ENCODE measurements at regions of chr12 and their contacts with region 1.

Region 1: DNA sequence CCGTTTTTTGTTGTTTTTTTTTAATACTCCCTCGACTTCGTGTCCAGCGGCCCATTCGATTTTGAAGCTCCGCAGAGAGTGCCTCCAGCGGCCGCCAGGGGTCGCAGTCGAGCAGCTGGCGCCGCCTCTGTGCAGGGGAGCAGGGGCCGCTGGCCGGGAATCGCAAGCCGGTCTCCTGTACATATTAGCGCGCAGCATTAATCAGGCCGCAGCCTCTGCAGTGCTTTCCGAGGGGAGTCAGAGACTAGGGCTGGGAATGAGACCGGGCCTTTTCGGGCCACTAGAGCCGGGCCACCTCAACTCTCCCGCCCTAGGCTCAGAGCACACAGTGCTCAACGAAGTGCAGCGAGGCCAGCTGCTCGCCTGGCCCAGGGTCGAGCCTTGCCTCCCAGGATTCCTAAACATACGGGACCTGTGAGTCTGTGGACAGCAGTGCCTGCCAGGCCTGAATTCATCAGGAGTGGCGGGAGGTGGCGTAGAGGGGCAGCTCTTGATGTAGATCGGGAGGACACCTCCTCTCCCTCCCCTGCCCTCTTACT is 81.8 kb downstream of the EMP1 start:
- DNase-seq: peak; percentile 44 to 91 (median 77)
- ATAC-seq: peak; percentile 94 to 99 (median 98)
- H3K4me3 ChIP-seq: no peak overlapping the region
- H3K27ac ChIP-seq: no peak overlapping the region
- H3K4me1 ChIP-seq: peaks cover 0 to 3% (median 0%) of the 10 kb centered on the region in 3 donors
- H3K27me3 ChIP-seq: peaks cover 0 to 11% (median 0%) of the 10 kb centered on the region in 4 donors
- CTCF ChIP-seq: peak; percentile 95 to 99 (median 98)

Region 2: GRCh38 chr12:13135371-13136178 is 142.7 kb before region 1 on chr12:
- intact Hi-C with region 1: no loop called
- DNase-seq: peak in 5 of 6 donors; percentile 39 to 69 (median 68)
- ATAC-seq: peak; percentile 88 to 98 (median 93)
- H3K4me3 ChIP-seq: no peak overlapping the region
- H3K27ac ChIP-seq: peak overlapping the region in 3 of 4 donors; percentile 19 to 58 (median 52)
- H3K4me1 ChIP-seq: no peaks in the 10 kb centered on the region
- H3K27me3 ChIP-seq: no peaks in the 10 kb centered on the region
- CTCF ChIP-seq: no peak

Region 3: DNA sequence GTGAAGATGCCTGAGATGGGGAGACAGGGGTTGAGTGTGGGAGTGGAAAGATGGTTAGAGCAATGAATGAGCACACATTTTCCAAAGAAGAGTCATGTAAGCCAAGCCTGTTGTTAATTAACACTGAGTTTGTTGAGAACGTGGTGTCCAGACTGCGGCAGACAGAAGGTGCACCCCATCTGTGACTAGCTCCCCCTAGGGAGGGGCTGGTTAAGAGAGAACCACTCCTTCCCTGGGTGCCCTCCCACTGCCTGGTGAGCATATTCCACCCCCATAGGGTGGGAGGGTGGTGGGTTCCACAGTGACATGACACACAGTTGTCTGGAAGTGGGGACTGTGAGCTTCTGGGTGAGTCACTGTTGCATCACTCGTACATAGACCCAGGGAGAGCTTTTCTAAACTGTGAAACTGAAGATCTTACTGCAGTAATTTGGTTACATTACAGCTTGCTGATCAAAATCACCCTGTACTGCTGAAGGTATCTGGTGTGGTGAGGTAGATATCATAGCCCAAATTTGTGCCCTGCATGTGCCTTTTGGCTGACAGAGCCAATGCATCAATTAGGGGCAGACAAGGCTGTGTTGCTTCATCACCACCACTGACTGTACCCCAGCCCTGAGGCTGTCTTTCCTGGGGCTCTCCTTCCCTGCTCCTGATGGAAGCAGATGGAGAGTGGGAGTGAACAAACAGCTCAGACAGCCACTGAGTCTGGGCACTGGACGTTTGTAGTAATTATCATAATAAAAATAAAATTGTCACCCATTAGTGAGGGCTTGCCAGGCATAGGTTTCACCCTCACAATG is 69.1 kb after region 1 on chr12:
- intact Hi-C with region 1: no loop called
- DNase-seq: no peak
- ATAC-seq: peak in 2 of 4 donors; percentile 22 to 54
- H3K4me3 ChIP-seq: no peak overlapping the region
- H3K27ac ChIP-seq: no peak overlapping the region
- H3K4me1 ChIP-seq: no peaks in the 10 kb centered on the region
- H3K27me3 ChIP-seq: peaks cover 0 to 4% (median 0%) of the 10 kb centered on the region in 4 donors
- CTCF ChIP-seq: no peak

Region 4: GRCh38 chr12:13661005-13661887 is 382.9 kb after region 1 on chr12:
- intact Hi-C with region 1: loop called in 1 of 3 experiments (anchors 10 kb)
- DNase-seq: peak; percentile 22 to 61 (median 36)
- ATAC-seq: peak; percentile 76 to 95 (median 92)
- H3K4me3 ChIP-seq: no peak overlapping the region
- H3K27ac ChIP-seq: no peak overlapping the region
- H3K4me1 ChIP-seq: no peaks in the 10 kb centered on the region
- H3K27me3 ChIP-seq: no peaks in the 10 kb centered on the region
- CTCF ChIP-seq: peak; percentile 64 to 87 (median 82)